ENCODE measurements at regions of chr14 and their contacts with region 1.

Region 1: DNA sequence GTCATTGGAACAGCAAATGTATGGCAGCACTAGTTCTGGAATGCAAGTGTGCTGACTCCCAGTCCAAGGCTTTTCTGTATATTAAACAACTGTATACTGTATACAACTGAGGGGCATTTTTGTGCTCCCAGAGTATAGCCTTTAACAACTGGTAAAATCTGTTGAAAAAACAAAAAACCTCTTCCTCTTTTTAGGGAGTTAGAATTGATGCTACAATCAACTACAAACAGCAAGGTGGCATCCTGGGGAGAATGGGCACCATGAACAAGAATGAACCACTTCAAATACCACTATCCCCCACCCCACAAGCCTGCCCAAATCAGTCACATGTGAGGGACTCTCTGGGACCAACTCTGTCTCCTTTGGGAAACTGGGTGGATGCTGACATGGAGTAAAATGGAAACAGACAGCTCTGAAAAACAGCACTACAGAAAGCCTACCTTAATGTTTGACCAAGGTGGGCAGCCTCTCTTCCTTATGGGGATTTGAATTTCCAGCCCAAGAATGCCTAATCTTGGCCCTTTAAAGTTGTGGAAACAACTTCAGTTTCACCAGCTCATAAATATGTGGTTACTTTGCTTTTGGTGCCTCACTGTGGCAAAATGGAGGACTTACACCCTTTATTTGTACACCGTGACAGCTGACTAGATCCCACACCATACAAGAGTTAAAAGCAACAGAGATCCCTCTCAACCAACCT is 7.5 kb downstream of the VTI1B start:
- DNase-seq: no peak
- ATAC-seq: peak; percentile 87
- H3K4me3 Mint-ChIP-seq: peak overlapping the region; percentile 44
- H3K27ac Mint-ChIP-seq: peak overlapping the region; percentile 68
- H3K4me1 Mint-ChIP-seq: peaks cover 58% of the 10 kb centered on the region
- H3K27me3 Mint-ChIP-seq: no peaks in the 10 kb centered on the region
- CTCF ChIP-seq: no peak

Region 2: GRCh38 chr14:67526676-67527459 is 140.0 kb before region 1 on chr14:
- CTCF ChIA-PET with region 1: interaction called, 5 read pairs
- POLR2A ChIA-PET with region 1: no interaction called
- intact Hi-C with region 1: loop called (anchors 1 kb)
- DNase-seq: no peak
- ATAC-seq: peak; percentile 77
- H3K4me3 Mint-ChIP-seq: no peak overlapping the region
- H3K27ac Mint-ChIP-seq: no peak overlapping the region
- H3K4me1 Mint-ChIP-seq: peaks cover 3% of the 10 kb centered on the region
- H3K27me3 Mint-ChIP-seq: peaks cover 51% of the 10 kb centered on the region
- CTCF ChIP-seq: peak; percentile 20

Region 3: GRCh38 chr14:67583711-67584644 is 82.9 kb before region 1 on chr14:
- CTCF ChIA-PET with region 1: interaction called, 81 read pairs
- POLR2A ChIA-PET with region 1: interaction called, 3 read pairs
- intact Hi-C with region 1: loop called (anchors 1 kb)
- DNase-seq: no peak
- ATAC-seq: peak; percentile 80
- H3K4me3 Mint-ChIP-seq: no peak overlapping the region
- H3K27ac Mint-ChIP-seq: no peak overlapping the region
- H3K4me1 Mint-ChIP-seq: peaks cover 5% of the 10 kb centered on the region
- H3K27me3 Mint-ChIP-seq: no peaks in the 10 kb centered on the region
- CTCF ChIP-seq: peak; percentile 46

Region 4: DNA sequence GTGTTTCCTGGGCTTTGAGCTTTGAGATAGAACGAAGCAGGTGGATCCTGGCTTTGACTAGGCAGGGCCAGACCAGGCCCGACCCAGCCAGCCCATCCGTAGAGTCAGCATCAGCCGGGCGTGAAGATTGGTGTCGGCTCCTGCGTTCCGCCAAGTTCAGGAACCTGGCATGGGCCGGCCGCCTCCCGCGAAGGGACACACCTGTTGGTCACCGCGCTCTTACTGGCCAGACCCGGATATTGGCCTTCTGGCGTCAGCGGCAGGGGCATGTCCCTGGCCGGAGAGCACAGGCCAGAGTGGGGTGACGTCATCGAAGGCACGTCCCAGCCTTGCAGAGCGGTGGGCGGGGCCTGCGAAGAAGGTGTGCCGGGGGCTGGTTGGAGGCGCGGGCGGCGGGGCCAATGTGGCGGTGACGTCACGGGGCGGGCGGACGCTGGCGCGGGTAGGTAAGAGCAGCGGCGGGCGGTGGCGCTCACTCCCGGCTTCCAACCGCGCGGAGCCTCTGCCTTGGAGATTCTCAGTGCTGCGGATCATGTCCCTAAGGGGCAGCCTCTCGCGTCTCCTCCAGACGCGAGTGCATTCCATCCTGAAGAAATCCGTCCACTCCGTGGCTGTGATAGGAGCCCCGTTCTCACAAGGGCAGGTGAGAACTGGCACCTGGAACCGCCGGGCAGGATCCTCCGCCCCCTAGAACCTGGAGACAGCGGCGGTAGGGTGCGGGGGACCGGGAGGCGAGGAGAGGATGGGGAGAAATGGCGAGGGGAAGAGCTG is 47.3 kb before region 1 on chr14 and contains the start of gene ARG2:
- CTCF ChIA-PET with region 1: interaction called, 23 read pairs
- POLR2A ChIA-PET with region 1: interaction called, 3 read pairs
- intact Hi-C with region 1: loop called (anchors 1 kb)
- DNase-seq: peak; percentile 95
- ATAC-seq: peak; percentile 94
- H3K4me3 Mint-ChIP-seq: peak within 1 kb of the TSS; percentile 88
- H3K27ac Mint-ChIP-seq: peak within 1 kb of the TSS; percentile 79
- H3K4me1 Mint-ChIP-seq: peaks cover 25% of the 10 kb centered on the region
- H3K27me3 Mint-ChIP-seq: no peaks in the 10 kb centered on the region
- CTCF ChIP-seq: no peak
- total RNA-seq, gene ARG2: 0.40 and 0.46 TPM in 2 replicates

Region 5: DNA sequence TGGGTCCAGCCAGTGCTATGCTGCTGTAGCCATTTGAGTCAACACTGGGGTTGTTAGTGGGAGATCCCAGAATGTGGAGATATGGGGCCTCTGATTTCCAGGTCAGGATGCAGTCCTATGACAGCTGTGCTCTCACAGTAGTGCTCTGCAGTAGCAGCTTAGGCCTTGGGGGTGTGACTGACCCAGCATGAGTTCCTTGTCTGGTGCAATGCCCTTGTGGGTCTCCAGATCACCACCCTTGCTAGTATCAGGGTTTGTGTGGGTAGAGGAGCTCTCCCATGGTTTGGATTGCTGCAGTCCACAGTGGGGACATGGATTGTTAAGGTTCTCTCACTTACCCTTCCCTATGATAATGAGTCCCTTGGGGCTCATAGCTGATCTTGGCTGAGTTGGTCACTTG is 266.4 kb after region 1 on chr14:
- CTCF ChIA-PET with region 1: no interaction called
- POLR2A ChIA-PET with region 1: no interaction called
- intact Hi-C with region 1: no loop called
- DNase-seq: no peak
- ATAC-seq: no peak
- H3K4me3 Mint-ChIP-seq: no peak overlapping the region
- H3K27ac Mint-ChIP-seq: no peak overlapping the region
- H3K4me1 Mint-ChIP-seq: peaks cover 4% of the 10 kb centered on the region
- H3K27me3 Mint-ChIP-seq: no peaks in the 10 kb centered on the region
- CTCF ChIP-seq: no peak

Region 6: GRCh38 chr14:67951529-67952135 is 284.7 kb after region 1 on chr14:
- CTCF ChIA-PET with region 1: no interaction called
- POLR2A ChIA-PET with region 1: no interaction called
- intact Hi-C with region 1: no loop called
- DNase-seq: no peak
- ATAC-seq: no peak
- H3K4me3 Mint-ChIP-seq: no peak overlapping the region
- H3K27ac Mint-ChIP-seq: no peak overlapping the region
- H3K4me1 Mint-ChIP-seq: no peaks in the 10 kb centered on the region
- H3K27me3 Mint-ChIP-seq: no peaks in the 10 kb centered on the region
- CTCF ChIP-seq: no peak